Posterior cingulate gyrus (tissue), 11 donors: ENCODE measurements at regions of chr17 and their contacts with region 1.

Region 1: DNA sequence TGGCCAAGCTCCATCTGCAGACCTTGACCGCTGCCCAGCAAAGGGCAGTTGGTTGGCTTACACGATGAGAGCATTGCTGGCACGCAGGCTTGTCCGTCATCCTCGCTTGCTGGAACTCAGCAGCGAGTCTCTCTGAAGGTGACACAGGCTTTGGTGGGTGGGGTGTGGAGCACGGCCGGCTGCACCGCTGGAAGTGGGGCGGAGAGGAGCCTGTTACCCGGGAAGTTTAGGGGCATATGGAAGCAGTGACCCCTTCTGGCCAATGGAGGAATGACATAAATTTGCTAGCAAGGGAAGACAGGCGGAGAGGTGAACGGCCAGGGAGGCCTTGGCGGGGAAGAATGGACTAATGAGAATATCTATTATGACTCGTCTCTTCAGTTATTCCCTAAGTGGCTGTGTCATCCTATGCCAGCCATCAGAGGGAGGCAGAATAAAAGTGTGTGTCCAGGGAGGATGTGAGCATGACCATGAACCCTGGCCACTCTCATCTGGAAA is 65.9 kb upstream of the SDK2 start:
- DNase-seq: peak in 5 of 10 donors; percentile 47 to 89 (median 67)

Region 2: DNA sequence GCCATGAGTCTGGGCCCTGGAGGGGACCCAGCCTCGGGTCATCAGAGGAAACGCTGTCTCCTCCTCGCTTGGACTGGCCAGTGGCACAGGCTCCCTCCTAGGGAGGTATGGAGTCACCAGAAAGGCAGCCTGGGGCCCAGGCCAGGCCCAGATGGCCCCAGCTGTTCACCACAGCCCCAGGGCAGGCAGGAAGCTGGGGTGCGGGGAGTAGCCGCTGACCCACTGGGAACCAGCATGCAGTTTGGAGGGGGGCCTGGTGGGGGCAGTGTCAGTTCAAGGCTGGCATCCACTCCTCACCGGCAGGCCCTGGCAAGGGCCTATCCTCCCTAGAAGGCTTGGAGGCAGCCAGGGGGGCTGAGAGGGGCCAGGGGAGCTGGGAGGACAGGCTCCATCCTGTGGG is 114.7 kb before region 1 on chr17:
- intact Hi-C with region 1: loop called (anchors 5 kb)
- DNase-seq: peak in 6 of 10 donors; percentile 14 to 75 (median 41)

Region 3: DNA sequence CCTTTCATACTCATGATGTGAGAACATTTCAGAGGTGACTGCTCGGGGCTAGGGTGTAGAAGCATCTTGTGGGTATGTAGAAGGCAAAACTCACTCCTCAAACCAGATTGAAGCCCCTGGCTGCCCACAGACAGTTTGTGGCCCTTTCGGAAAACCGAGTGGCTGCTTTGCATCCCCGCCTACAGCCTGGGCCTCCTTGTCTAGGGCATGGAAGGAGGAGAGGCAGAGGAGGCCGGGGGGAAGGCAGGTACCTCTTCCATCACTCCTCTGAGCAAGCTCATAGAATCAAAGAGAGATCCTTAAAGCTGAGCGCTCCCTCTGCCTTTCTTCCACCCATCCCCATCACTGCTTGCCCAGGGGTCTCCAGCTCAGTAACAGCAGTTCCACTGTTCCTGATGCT is 54.2 kb before region 1 on chr17:
- intact Hi-C with region 1: loop called (anchors 1 kb)
- DNase-seq: no peak

Region 4: DNA sequence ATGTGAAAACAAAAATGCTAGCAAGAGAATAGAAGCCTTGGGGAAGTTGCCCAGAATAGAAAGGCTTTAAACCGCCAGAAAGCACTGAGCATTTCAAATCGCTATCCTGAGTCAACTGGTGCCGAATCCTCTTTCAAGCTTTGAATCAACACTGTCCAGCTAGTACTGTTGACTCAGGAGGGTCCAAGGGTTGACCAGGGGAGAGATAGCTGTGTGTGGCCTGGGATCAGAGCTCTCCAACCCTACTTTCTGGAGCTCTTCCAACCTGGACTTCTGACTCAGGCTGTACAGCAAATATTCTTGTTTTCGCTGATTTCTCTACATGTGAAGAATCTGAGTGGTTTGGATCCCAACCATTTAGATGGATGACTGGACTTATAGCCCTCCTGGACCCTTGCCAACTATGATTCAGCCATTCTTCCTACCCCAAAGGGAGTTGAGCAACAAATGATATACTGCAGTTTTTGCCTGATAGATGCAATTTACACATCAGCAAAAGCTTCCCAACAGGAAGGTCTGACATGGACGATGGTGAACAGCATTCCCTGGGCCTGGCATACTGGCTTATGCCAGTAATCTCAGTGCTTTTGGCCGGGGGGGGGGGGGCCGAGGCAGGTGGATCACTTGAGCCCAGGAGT is 88.1 kb after region 1 on chr17:
- intact Hi-C with region 1: no loop called
- DNase-seq: no peak